Adrenal gland (tissue), 19 donors: ENCODE measurements at regions of chr12 and their contacts with region 1.

Region 1: DNA sequence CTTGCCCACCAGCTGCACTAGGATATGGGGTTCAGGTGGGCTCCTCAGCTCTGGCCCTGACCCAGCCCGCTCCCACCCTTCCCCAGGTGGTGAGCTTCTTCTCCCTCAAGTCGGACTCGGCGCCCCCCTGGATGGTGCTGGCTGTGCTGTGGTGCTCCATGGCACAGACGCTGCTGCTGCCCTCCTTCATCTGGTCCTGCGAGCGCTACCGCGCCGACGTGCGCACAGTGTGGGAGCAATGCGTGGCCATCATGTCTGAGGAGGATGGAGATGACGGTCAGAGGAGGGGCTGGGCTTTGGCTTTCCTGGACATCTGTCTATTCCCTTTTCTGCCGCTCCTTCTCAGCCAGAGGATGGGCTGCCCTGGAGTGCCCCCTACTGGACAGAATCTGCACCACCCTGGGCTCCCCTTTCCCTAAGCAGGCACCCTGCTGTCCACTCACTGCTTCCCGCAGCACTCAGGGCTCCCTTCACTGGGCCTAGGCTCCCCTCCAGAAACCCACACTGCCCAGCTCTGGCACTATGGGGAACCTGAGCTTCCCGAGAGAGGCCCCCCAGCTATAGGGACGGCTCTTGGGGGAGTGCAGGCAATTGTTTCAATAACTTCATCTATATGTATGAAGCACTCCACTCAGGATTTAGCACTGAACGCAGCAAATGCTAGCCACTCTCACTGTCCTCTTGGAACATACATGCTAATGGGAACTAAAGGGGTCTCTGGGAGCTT is 2.6 kb upstream of the P3H3 start:
- DNase-seq: peak; percentile 81 to 95 (median 87)
- H3K4me3 ChIP-seq: no peak overlapping the region
- H3K27ac ChIP-seq: no peak overlapping the region
- H3K4me1 ChIP-seq: peaks cover 6 to 15% of the 10 kb centered on the region in 2 donors
- H3K27me3 ChIP-seq: peaks cover 4% of the 10 kb centered on the region
- CTCF ChIP-seq: peak; percentile 78 to 96 (median 92)
- POLR2A ChIP-seq: no peak

Region 2: DNA sequence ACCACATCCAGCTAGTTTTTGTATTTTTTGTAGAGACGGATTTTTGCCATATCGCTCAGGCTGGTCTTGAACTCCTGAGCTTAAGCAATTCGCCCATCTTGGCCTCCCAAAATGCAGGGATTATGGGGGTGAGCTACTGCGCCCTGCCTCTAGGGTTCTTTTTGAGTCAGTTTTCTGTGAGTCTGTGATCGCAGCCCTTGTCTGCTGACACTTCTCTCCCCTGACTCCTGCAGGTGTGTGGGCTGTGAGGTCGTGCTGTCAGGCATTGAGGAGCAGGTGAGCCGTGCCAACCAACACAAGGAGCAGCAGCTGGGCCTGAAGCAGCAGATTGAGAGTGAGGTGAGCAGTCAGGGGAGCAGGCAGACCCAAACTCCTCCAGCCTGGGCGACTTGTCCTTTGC is 95.4 kb before region 1 on chr12:
- intact Hi-C with region 1: loop called in 1 of 2 experiments (anchors 5 kb)
- DNase-seq: no peak
- H3K4me3 ChIP-seq: no peak overlapping the region
- H3K27ac ChIP-seq: no peak overlapping the region
- H3K4me1 ChIP-seq: peaks cover 4 to 10% of the 10 kb centered on the region in 2 donors
- H3K27me3 ChIP-seq: no peaks in the 10 kb centered on the region
- CTCF ChIP-seq: no peak
- POLR2A ChIP-seq: no peak

Region 3: GRCh38 chr12:6745741-6746525 is 79.6 kb before region 1 on chr12:
- intact Hi-C with region 1: loop called in 1 of 2 experiments (anchors 10 kb)
- DNase-seq: no peak
- H3K4me3 ChIP-seq: no peak overlapping the region
- H3K27ac ChIP-seq: peak overlapping the region in 2 of 5 donors; percentile 5 to 81
- H3K4me1 ChIP-seq: peaks cover 0 to 2% of the 10 kb centered on the region in 2 donors
- H3K27me3 ChIP-seq: no peaks in the 10 kb centered on the region
- CTCF ChIP-seq: no peak
- POLR2A ChIP-seq: no peak

Region 4: DNA sequence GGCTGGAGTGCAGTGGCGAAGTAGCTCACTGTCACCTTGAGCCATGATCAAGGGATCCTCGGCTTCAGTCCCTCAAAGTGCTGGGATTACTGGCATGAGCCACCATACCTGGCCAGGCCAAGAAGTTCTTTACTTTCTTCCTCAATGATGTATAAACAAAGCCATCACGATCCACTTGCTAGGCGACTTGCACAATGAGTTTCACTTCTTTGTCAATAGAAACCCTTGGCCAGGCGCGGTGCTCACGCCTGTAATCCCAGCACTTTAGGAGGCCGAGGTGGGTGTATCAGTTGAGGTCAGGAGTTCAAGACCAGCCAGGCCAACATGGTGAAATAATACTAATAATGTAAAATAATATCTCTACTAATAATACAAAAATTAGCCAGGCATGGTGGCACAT is 61.9 kb after region 1 on chr12:
- intact Hi-C with region 1: no loop called
- DNase-seq: peak in 1 of 7 donors; percentile 12
- H3K4me3 ChIP-seq: no peak overlapping the region
- H3K27ac ChIP-seq: no peak overlapping the region
- H3K4me1 ChIP-seq: peaks cover 5 to 16% of the 10 kb centered on the region in 2 donors
- H3K27me3 ChIP-seq: no peaks in the 10 kb centered on the region
- CTCF ChIP-seq: no peak
- POLR2A ChIP-seq: no peak

Region 5: DNA sequence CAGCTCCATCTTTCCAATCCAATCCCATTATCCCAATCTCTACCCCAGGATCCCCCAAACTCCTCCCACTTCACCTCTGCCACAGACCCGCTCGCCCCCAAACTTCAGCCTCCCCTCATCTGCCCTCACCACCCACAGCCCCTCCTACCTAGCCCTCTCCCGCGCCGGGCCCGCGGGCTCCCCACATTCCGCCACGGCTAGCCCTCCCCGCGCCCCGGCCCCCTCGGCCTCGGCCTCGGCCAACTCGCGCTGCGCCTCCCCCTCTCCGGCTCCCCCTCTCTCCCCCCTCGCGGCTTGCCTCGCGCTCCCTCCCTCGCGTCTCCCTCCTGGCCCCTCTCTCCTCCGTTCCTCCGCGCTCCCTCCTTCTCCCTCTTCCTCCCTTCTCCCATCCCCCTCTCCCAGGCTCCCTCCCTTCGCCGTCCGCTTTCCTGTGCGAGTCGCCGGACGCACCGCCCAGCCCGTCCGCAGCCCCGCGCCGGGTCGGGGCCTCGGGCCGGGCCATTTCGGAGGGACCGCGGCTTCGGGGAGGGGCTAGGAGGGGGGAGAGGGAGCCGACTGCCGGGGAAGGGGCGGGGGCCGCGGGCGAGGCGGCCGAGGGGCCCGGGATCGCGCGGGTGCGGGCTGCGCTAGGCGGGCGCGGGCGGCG is 101.9 kb after region 1 on chr12 and contains the start of gene ATN1:
- intact Hi-C with region 1: no loop called
- DNase-seq: peak; percentile 89 to 95 (median 91)
- H3K4me3 ChIP-seq: peak within 1 kb of the TSS; percentile 41 to 91 (median 84)
- H3K27ac ChIP-seq: peak within 1 kb of the TSS; percentile 87 to 98 (median 93)
- H3K4me1 ChIP-seq: peaks cover 51 to 68% of the 10 kb centered on the region in 2 donors
- H3K27me3 ChIP-seq: no peaks in the 10 kb centered on the region
- CTCF ChIP-seq: no peak
- POLR2A ChIP-seq: peak; percentile 61 to 78
- total RNA-seq, gene ATN1: 8.8 to 263 (median 92.8) TPM